ENCODE measurements at regions of chr12 and their contacts with region 1.

Region 1: DNA sequence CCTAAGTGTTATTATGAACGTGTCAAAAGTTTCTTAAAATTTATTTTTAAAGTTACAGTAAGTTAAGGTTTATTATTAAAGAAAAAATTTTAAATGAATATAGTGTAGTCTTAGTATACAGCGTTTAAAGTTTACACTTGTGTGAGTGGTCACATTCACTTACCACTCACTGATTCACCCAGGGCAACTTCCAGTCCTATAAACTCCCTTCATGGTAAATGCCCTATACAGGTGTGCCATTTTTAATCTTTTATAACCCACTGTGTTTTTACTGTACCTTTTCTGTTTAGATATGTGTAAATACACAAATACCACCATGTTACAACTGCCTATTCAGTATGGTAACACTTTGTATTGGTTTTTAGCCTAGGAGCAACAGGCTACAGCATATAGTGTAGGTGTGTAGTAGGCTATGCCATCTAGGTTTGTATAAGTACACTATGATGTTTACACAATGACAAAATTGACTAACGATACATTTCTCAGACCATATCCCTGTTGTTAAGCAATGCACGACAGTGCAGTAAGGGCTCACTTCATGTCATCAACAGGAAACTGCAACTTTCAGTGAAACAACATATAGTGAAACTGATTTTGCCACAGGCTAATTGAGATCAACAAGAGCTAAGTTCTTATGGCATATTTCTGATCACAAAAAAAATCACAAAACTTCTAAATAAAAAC is 112.0 kb upstream of the TMCC3 start:
- DNase-seq: peak; percentile 59
- H3K4me3 ChIP-seq: no peak overlapping the region
- H3K27ac ChIP-seq: peak overlapping the region; percentile 96
- H3K4me1 ChIP-seq: peaks cover 7% of the 10 kb centered on the region
- H3K27me3 ChIP-seq: no peaks in the 10 kb centered on the region
- CTCF ChIP-seq: no peak

Region 2: GRCh38 chr12:94133964-94134795 is 628.2 kb before region 1 on chr12:
- CTCF ChIA-PET with region 1: interaction called, 3 read pairs
- dilution Hi-C with region 1: no loop called
- in situ Hi-C with region 1: no loop called
- intact Hi-C with region 1: loop called (anchors 10 kb)
- DNase-seq: peak; percentile 36
- H3K4me3 ChIP-seq: no peak overlapping the region
- H3K27ac ChIP-seq: no peak overlapping the region
- H3K4me1 ChIP-seq: no peaks in the 10 kb centered on the region
- H3K27me3 ChIP-seq: no peaks in the 10 kb centered on the region
- CTCF ChIP-seq: peak; percentile 58 to 71

Region 3: DNA sequence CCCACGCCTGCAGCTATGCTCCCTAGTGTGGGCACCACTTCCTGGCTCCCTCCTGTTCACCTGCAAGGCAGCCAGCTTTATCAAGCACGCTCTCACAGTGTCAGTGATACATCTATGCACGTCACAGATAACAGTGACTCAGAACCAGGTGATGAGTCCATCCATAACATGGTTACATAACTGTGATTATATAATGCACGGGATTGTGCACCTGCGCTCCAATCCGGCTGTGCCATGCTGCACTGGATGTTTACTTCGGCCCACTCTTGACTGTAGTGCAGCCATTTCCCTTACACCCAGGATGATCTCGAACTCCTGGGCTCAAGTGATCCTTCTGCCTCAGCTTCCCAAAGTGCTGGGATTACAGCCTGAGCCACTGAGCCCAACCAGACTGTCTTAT is 264.3 kb before region 1 on chr12:
- CTCF ChIA-PET with region 1: no interaction called
- dilution Hi-C with region 1: no loop called
- in situ Hi-C with region 1: no loop called
- intact Hi-C with region 1: no loop called
- DNase-seq: peak; percentile 31
- H3K4me3 ChIP-seq: no peak overlapping the region
- H3K27ac ChIP-seq: no peak overlapping the region
- H3K4me1 ChIP-seq: no peaks in the 10 kb centered on the region
- H3K27me3 ChIP-seq: no peaks in the 10 kb centered on the region
- CTCF ChIP-seq: no peak

Region 4: DNA sequence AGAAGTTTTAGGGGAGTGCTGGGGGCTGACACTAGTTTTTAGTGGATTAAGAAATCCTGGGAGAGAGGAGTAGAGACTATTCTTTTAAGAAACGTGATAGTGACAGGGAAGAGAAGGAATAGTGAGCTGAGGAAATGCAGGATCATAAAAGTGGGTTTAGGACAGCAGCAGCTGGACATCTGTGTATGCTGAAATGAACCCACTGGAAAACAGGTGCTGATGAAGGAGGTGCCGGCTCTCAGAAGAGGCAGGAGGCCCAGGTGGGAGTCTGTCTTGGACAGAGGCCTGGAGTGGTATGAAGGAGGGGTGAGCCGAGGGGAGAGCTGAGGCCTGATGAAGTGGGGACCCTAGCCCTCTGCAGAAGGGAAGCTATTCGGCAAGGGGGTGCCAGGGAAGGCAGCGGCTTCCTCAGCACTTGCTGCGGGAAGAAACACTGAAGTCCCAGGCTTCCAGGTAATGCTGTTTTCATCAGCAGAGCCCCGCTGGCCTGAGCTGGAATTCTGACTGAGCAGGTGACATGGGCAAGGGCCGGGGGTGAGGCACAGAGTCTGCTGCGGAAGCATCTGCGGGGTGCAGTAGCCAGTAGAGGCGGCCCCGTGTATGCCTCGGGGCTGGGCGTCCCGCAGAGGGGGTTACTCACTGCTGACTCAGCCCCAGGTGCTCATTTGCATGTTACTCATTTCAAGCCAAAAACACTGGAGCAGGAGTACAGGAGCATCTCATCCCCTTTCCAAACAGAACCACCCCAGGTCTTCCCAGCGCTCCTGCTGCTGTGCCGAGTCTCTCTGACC is 201.8 kb before region 1 on chr12:
- CTCF ChIA-PET with region 1: no interaction called
- dilution Hi-C with region 1: loop called (anchors 25 kb)
- in situ Hi-C with region 1: loop called in 1 of 2 experiments (anchors 10 kb)
- intact Hi-C with region 1: no loop called
- DNase-seq: peak; percentile 98
- H3K4me3 ChIP-seq: peak overlapping the region in 2 of 3 experiments; percentile 20 to 35
- H3K27ac ChIP-seq: peak overlapping the region; percentile 95
- H3K4me1 ChIP-seq: peaks cover 34% of the 10 kb centered on the region
- H3K27me3 ChIP-seq: no peaks in the 10 kb centered on the region
- CTCF ChIP-seq: no peak

Region 5: DNA sequence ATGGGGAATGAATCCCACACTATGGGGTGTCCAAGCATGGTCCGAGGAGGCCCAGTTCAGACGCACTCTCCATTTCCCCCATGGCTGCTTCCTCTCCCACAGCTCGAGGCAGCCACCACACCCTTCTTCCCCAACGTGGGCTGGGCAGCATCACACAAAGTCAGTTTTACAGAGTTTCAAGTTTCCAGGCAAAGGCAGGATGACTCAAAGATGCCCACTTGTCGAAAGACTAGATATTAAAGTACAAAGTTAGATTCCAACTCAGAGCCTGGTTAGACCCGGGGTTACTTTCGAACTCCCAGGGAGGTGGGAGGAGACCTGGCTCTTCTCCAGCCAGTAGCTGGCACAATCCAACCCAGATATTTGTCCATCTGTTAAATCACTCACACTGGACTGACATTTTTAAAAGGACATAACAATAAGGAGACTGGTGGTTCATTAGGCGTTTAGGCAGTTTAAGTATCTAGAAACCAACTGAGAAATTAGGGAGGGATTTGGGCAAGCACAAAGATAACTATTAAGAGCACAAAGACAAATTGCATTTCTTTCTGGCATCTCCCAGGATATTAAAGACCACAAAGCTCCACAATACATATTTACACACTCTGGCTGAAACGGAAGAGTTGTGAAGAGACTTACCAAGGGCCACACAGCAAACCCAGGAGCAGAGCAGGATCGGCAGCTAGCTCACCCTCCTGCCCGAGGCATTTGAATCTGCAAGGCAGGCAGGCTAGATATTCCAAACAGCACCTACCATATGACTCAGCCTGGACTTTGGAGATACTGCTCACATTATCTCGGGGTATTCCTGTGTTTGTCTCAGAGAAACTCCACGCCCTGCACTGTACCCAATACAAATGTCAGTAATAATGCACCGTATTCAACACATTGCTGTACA is 146.9 kb before region 1 on chr12:
- CTCF ChIA-PET with region 1: no interaction called
- dilution Hi-C with region 1: no loop called
- in situ Hi-C with region 1: loop called in 1 of 2 experiments (anchors 10 kb)
- intact Hi-C with region 1: loop called (anchors 5 kb)
- DNase-seq: peak; percentile 93
- H3K4me3 ChIP-seq: peak overlapping the region; percentile 16 to 44 (median 43)
- H3K27ac ChIP-seq: peak overlapping the region; percentile 95
- H3K4me1 ChIP-seq: peaks cover 61% of the 10 kb centered on the region
- H3K27me3 ChIP-seq: no peaks in the 10 kb centered on the region
- CTCF ChIP-seq: no peak

Region 6: DNA sequence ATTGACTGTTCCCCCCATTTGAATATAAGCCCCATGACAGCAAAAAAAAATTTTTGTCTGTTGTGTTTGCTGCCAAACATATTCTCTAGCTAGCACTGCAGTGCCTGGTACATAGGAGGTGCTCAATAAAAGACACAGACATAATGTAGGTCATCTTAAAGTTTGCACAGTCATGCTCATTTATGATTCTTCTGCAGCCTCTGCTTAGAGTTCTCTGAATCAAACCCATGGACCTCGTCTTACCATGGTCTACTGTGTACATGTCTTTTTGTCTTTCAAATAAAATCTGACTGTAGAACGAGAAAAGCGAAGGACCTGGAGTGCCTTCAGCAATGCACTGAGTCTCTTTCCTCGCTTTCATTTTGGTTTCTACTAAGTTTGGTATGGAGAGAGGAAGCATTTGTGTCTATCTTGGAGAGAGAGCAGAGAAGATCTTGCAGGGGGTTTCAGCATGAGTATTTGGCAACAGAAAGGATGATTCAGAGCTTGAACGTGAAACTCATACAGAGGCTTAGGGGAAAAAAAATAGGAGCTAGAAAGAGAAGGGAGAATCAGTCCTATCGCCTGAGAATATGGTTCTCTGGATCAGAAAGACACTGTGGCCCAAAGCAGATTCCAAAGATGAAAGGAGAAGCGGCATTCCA is 73.3 kb before region 1 on chr12:
- CTCF ChIA-PET with region 1: no interaction called
- dilution Hi-C with region 1: no loop called
- in situ Hi-C with region 1: no loop called
- intact Hi-C with region 1: no loop called
- DNase-seq: peak; percentile 38
- H3K4me3 ChIP-seq: no peak overlapping the region
- H3K27ac ChIP-seq: no peak overlapping the region
- H3K4me1 ChIP-seq: no peaks in the 10 kb centered on the region
- H3K27me3 ChIP-seq: no peaks in the 10 kb centered on the region
- CTCF ChIP-seq: no peak

Region 7: DNA sequence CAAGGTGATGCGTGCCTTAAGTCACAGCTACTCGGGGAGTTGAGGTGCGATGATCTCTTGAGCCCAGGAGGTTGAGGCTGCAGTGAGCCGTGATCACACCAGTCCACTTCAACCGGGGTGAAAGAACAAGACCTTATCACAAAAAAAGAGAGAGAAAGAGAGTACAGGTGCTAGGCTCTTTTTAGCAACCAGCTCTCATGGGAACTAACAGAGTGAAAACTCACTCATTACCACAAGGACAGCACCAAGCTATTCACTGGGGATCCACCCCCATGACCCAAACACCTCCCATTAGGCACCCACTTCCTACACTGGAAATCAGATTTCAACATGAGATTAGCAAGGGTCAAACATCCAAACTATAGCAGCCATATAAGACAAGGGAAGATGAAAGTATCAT is 76.9 kb after region 1 on chr12:
- CTCF ChIA-PET with region 1: no interaction called
- dilution Hi-C with region 1: no loop called
- in situ Hi-C with region 1: no loop called
- intact Hi-C with region 1: no loop called
- DNase-seq: no peak
- H3K4me3 ChIP-seq: no peak overlapping the region
- H3K27ac ChIP-seq: no peak overlapping the region
- H3K4me1 ChIP-seq: peaks cover 4% of the 10 kb centered on the region
- H3K27me3 ChIP-seq: no peaks in the 10 kb centered on the region
- CTCF ChIP-seq: no peak

Region 8: DNA sequence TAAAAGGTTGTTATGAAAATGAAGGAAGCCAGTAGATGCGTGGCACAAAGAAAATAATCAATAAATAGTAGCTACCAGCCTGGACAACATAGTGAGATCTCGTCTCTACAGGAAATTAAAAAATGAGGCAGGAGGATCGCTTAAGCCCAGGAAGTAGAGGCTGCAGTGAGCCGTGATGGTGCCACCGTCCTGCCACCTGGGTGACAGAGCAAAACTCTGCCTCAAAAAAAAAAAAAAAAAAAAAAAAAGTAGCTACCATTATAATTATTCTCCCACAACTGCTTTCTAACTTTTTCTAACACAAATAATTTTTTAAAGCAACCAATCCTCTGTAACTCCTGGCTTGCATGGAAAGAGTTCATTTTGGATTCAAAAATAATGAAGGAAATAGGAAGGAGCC is 108.1 kb after region 1 on chr12:
- CTCF ChIA-PET with region 1: interaction called, 12 read pairs
- dilution Hi-C with region 1: no loop called
- in situ Hi-C with region 1: no loop called
- intact Hi-C with region 1: loop called (anchors 5 kb)
- DNase-seq: no peak
- H3K4me3 ChIP-seq: no peak overlapping the region
- H3K27ac ChIP-seq: no peak overlapping the region
- H3K4me1 ChIP-seq: peaks cover 14% of the 10 kb centered on the region
- H3K27me3 ChIP-seq: peaks cover 24% of the 10 kb centered on the region
- CTCF ChIP-seq: no peak

Region 9: DNA sequence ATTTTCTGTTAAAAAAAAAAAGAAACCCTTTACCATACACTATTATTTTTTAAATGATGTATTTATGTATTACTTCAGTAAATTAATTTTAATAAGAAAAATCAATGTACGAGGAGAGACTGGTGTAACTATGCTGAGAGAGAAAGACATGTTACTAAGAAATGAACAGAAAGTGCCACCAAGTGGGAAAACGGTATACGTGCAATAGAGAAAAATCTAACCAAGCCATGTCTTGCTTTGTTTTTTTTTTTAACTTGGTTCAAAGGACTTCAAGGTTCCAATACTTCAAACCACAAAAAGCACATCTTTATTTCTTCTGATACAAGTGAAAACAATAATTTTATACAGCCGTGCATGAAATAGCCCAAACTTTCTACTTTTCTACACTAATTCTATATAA is 218.2 kb after region 1 on chr12:
- CTCF ChIA-PET with region 1: no interaction called
- dilution Hi-C with region 1: no loop called
- in situ Hi-C with region 1: no loop called
- intact Hi-C with region 1: loop called (anchors 5 kb)
- DNase-seq: no peak
- H3K4me3 ChIP-seq: no peak overlapping the region
- H3K27ac ChIP-seq: no peak overlapping the region
- H3K4me1 ChIP-seq: peaks cover 13% of the 10 kb centered on the region
- H3K27me3 ChIP-seq: no peaks in the 10 kb centered on the region
- CTCF ChIP-seq: peak; percentile 1 to 10

Region 10: GRCh38 chr12:95336390-95337067 is 574.1 kb after region 1 on chr12:
- CTCF ChIA-PET with region 1: no interaction called
- dilution Hi-C with region 1: no loop called
- in situ Hi-C with region 1: no loop called
- intact Hi-C with region 1: loop called (anchors 2 kb)
- DNase-seq: peak; percentile 61
- H3K4me3 ChIP-seq: no peak overlapping the region
- H3K27ac ChIP-seq: no peak overlapping the region
- H3K4me1 ChIP-seq: peaks cover 6% of the 10 kb centered on the region
- H3K27me3 ChIP-seq: no peaks in the 10 kb centered on the region
- CTCF ChIP-seq: peak; percentile 88 to 90

Measured in mammary epithelial cell (primary cell).